Naive thymus-derived CD4-positive, alpha-beta T cell (primary cell): ENCODE measurements at regions of chr4 and their contacts with region 1.

Region 1: DNA sequence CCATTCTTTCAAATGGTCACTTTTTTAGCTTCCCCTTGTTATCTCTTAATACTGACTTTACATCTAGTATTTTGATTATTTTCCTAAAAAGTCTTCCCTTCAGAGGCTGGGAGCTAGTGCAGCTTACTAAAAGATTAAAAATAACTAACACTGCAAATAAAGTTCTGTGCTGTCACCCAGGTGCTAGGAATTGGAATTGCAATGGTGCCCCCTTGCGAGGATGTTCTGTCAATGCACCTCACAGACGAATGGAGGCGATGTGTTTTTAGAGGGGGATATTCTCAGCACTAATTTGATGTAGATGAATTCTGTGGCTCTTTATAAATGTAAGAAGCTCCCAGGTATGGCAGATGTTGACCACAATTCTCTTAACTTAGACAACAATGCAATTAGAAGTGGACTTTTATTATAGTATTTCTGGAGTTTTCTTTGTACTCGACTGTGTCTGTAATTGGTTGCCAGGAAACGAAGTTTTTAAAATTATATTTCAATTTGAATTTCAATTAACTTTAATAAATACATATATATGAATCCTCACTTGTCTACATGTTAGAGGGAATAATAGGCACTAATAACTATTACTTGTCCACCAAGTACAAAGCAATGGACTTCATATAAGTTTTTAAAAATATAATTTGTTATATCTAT is 22.0 kb upstream of the SMIM31 start:
- DNase-seq: peak; percentile 10 to 46 (median 39)
- ATAC-seq: peak; percentile 58
- H3K4me3 ChIP-seq: no peak overlapping the region
- H3K4me3 Mint-ChIP-seq: no peak overlapping the region
- H3K27ac ChIP-seq: no peak overlapping the region
- H3K27ac Mint-ChIP-seq: no peak overlapping the region
- H3K4me1 ChIP-seq: no peaks in the 10 kb centered on the region
- H3K4me1 Mint-ChIP-seq: peaks cover 0 to 4% (median 0%) of the 10 kb centered on the region in 7 donors
- H3K27me3 ChIP-seq: no peaks in the 10 kb centered on the region
- H3K27me3 Mint-ChIP-seq: peaks cover 10 to 16% (median 15%) of the 10 kb centered on the region in 5 donors

Region 2: GRCh38 chr4:163484906-163485305 is 1247.0 kb before region 1 on chr4:
- CTCF ChIA-PET with region 1: no interaction called
- POLR2A ChIA-PET with region 1: no interaction called
- intact Hi-C with region 1: loop called (anchors 1 to 5 kb)
- DNase-seq: peak in 8 of 9 donors; percentile 14 to 50 (median 36)
- ATAC-seq: peak; percentile 74
- H3K4me3 ChIP-seq: no peak overlapping the region
- H3K4me3 Mint-ChIP-seq: no peak overlapping the region
- H3K27ac ChIP-seq: no peak overlapping the region
- H3K27ac Mint-ChIP-seq: no peak overlapping the region
- H3K4me1 ChIP-seq: no peaks in the 10 kb centered on the region
- H3K4me1 Mint-ChIP-seq: peaks cover 0 to 6% (median 0%) of the 10 kb centered on the region in 7 donors
- H3K27me3 ChIP-seq: no peaks in the 10 kb centered on the region
- H3K27me3 Mint-ChIP-seq: peaks cover 4 to 21% (median 10%) of the 10 kb centered on the region in 5 donors

Region 3: GRCh38 chr4:164221631-164222030 is 510.3 kb before region 1 on chr4:
- CTCF ChIA-PET with region 1: no interaction called
- POLR2A ChIA-PET with region 1: no interaction called
- intact Hi-C with region 1: no loop called
- DNase-seq: no peak
- ATAC-seq: no peak
- H3K4me3 ChIP-seq: no peak overlapping the region
- H3K4me3 Mint-ChIP-seq: no peak overlapping the region
- H3K27ac ChIP-seq: no peak overlapping the region
- H3K27ac Mint-ChIP-seq: no peak overlapping the region
- H3K4me1 ChIP-seq: no peaks in the 10 kb centered on the region
- H3K4me1 Mint-ChIP-seq: peaks cover 0 to 1% (median 0%) of the 10 kb centered on the region in 7 donors
- H3K27me3 ChIP-seq: no peaks in the 10 kb centered on the region
- H3K27me3 Mint-ChIP-seq: no peaks in the 10 kb centered on the region

Region 4: GRCh38 chr4:164700471-164700870 is 31.5 kb before region 1 on chr4:
- CTCF ChIA-PET with region 1: no interaction called
- POLR2A ChIA-PET with region 1: no interaction called
- intact Hi-C with region 1: loop called in 1 of 2 experiments (anchors 2 kb)
- DNase-seq: no peak
- ATAC-seq: no peak
- H3K4me3 ChIP-seq: no peak overlapping the region
- H3K4me3 Mint-ChIP-seq: no peak overlapping the region
- H3K27ac ChIP-seq: no peak overlapping the region
- H3K27ac Mint-ChIP-seq: peak overlapping the region in 1 of 9 donors; percentile 4
- H3K4me1 ChIP-seq: no peaks in the 10 kb centered on the region
- H3K4me1 Mint-ChIP-seq: peaks cover 0 to 3% (median 0%) of the 10 kb centered on the region in 7 donors
- H3K27me3 ChIP-seq: no peaks in the 10 kb centered on the region
- H3K27me3 Mint-ChIP-seq: peaks cover 3 to 13% (median 4%) of the 10 kb centered on the region in 5 donors

Region 5: GRCh38 chr4:164768516-164768915 is 36.6 kb after region 1 on chr4:
- CTCF ChIA-PET with region 1: no interaction called
- POLR2A ChIA-PET with region 1: no interaction called
- intact Hi-C with region 1: no loop called
- DNase-seq: no peak
- ATAC-seq: no peak
- H3K4me3 ChIP-seq: no peak overlapping the region
- H3K4me3 Mint-ChIP-seq: no peak overlapping the region
- H3K27ac ChIP-seq: no peak overlapping the region
- H3K27ac Mint-ChIP-seq: no peak overlapping the region
- H3K4me1 ChIP-seq: no peaks in the 10 kb centered on the region
- H3K4me1 Mint-ChIP-seq: no peaks in the 10 kb centered on the region
- H3K27me3 ChIP-seq: no peaks in the 10 kb centered on the region
- H3K27me3 Mint-ChIP-seq: peaks cover 7 to 40% (median 20%) of the 10 kb centered on the region in 5 donors